ENCODE measurements at regions of chr12 and their contacts with region 1.

Region 1: GRCh38 chr12:40117818-40118217 is 11.9 kb upstream of the SLC2A13 start:
- DNase-seq: no peak
- H3K4me3 Mint-ChIP-seq: no peak overlapping the region
- H3K27ac Mint-ChIP-seq: peak overlapping the region; percentile 45
- H3K4me1 Mint-ChIP-seq: peaks cover 8% of the 10 kb centered on the region
- H3K27me3 Mint-ChIP-seq: peaks cover 12% of the 10 kb centered on the region

Region 2: GRCh38 chr12:40137252-40137651 is 19.4 kb after region 1 on chr12:
- intact Hi-C with region 1: loop called (anchors 2 kb)
- DNase-seq: no peak
- H3K4me3 Mint-ChIP-seq: no peak overlapping the region
- H3K27ac Mint-ChIP-seq: no peak overlapping the region
- H3K4me1 Mint-ChIP-seq: peaks cover 16% of the 10 kb centered on the region
- H3K27me3 Mint-ChIP-seq: peaks cover 8% of the 10 kb centered on the region

Region 3: GRCh38 chr12:40168868-40169267 is 51.0 kb after region 1 on chr12:
- intact Hi-C with region 1: loop called (anchors 1 kb)
- DNase-seq: no peak
- H3K4me3 Mint-ChIP-seq: no peak overlapping the region
- H3K27ac Mint-ChIP-seq: peak overlapping the region; percentile 41
- H3K4me1 Mint-ChIP-seq: peaks cover 19% of the 10 kb centered on the region
- H3K27me3 Mint-ChIP-seq: peaks cover 11% of the 10 kb centered on the region

Measured in activated T-helper 1 cell treated with anti-CD3 and anti-CD28 coated beads, Interleukin-12 subunit alpha, Interleukin-12 subunit beta, Interleukin-2, Interleukin-4 antibody, amounts not matched to agents 30 ng/mL and 10 ng/mL and 1 ng/mL, durations not matched to agents 14 hours and 24 hours and 36 hours (primary cell).